Activated CD4-positive, alpha-beta T cell treated with anti-CD3 and anti-CD28 coated beads for 36 hours (primary cell): ENCODE measurements at regions of chr1 and their contacts with region 1.

Region 1: GRCh38 chr1:159077120-159077961 is 775 bp upstream of the AIM2 start:
- DNase-seq: peak; percentile 98
- ATAC-seq: peak; percentile 83
- H3K4me3 Mint-ChIP-seq: peak overlapping the region; percentile 85
- H3K27ac Mint-ChIP-seq: peak overlapping the region; percentile 99
- H3K4me1 Mint-ChIP-seq: peaks cover 43% of the 10 kb centered on the region
- H3K27me3 Mint-ChIP-seq: no peaks in the 10 kb centered on the region

Region 2: GRCh38 chr1:158371188-158371953 is 706.0 kb before region 1 on chr1:
- CTCF ChIA-PET with region 1: no interaction called
- POLR2A ChIA-PET with region 1: no interaction called
- intact Hi-C with region 1: loop called in 1 of 2 experiments (anchors 5 kb)
- DNase-seq: peak; percentile 75
- ATAC-seq: peak; percentile 100
- H3K4me3 Mint-ChIP-seq: no peak overlapping the region
- H3K27ac Mint-ChIP-seq: no peak overlapping the region
- H3K4me1 Mint-ChIP-seq: peaks cover 10% of the 10 kb centered on the region
- H3K27me3 Mint-ChIP-seq: peaks cover 24% of the 10 kb centered on the region

Region 3: GRCh38 chr1:158931055-158931737 is 146.1 kb before region 1 on chr1 and contains the start of gene PYHIN1:
- CTCF ChIA-PET with region 1: no interaction called
- POLR2A ChIA-PET with region 1: no interaction called
- intact Hi-C with region 1: loop called (anchors 2 to 10 kb)
- DNase-seq: peak; percentile 30
- ATAC-seq: peak; percentile 79
- H3K4me3 Mint-ChIP-seq: peak within 1 kb of the TSS; percentile 65
- H3K27ac Mint-ChIP-seq: peak within 1 kb of the TSS; percentile 75
- H3K4me1 Mint-ChIP-seq: peaks cover 32% of the 10 kb centered on the region
- H3K27me3 Mint-ChIP-seq: peaks cover 3% of the 10 kb centered on the region
- total RNA-seq, gene PYHIN1: 5.6 to 6.8 TPM

Region 4: DNA sequence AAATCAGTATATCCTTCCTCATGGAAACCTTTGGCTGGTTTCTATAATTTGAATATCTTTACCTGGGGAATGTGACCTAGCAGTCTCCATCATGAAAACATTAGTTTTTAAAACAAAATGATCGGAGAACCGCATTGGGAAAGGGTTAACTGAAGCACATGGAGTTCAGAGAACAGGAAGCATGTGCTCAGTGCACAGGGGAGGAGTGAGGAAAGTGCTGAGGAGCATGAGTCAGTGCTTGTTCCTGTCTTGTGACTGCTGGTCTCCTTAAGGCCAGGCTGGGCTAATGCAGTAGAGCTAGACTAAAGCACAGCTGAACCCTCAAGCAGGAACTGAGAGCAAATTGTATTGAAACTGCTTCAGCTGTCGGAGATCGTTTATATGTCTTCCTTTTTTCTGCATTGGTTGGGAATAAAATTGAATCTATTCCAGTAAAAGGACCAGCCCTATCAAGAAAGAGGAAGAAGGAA is 61.9 kb before region 1 on chr1:
- CTCF ChIA-PET with region 1: interaction called, 17 read pairs
- POLR2A ChIA-PET with region 1: interaction called, 43 read pairs
- intact Hi-C with region 1: no loop called
- DNase-seq: peak; percentile 81
- ATAC-seq: peak; percentile 83
- H3K4me3 Mint-ChIP-seq: peak overlapping the region; percentile 82
- H3K27ac Mint-ChIP-seq: peak overlapping the region; percentile 96
- H3K4me1 Mint-ChIP-seq: peaks cover 46% of the 10 kb centered on the region
- H3K27me3 Mint-ChIP-seq: no peaks in the 10 kb centered on the region

Region 5: DNA sequence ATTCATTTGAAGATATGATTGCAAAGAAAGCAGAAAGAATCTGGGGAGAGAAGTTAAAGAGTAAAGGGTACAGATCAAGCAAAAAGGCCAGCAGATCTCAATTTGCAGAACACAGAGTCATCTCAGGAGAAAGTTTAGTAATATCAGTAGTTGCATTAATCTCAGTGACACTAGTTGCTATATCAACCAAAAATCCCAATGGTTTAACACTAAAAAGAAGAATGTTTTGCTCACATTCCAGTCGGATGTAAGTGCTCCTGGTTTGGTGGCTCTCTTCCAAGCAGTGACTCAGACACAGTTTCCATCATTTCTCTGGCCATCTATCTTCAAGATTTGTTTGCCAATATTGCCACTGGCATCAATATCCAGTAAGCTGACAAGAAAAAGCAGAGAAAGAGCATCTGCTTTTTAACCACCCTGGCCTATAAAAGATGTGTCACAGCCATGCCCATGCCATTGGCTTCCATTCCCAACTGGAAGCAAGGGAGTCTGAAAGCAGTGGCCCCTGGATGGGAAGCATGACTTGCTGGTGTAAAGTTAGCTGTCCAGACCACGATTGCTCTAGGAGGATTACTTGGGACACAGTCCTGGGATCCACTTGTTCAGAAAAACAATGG is 44.8 kb after region 1 on chr1:
- CTCF ChIA-PET with region 1: interaction called, 4 read pairs
- POLR2A ChIA-PET with region 1: interaction called, 4 read pairs
- intact Hi-C with region 1: loop called (anchors 2 kb)
- DNase-seq: no peak
- ATAC-seq: peak; percentile 70
- H3K4me3 Mint-ChIP-seq: no peak overlapping the region
- H3K27ac Mint-ChIP-seq: no peak overlapping the region
- H3K4me1 Mint-ChIP-seq: peaks cover 15% of the 10 kb centered on the region
- H3K27me3 Mint-ChIP-seq: peaks cover 33% of the 10 kb centered on the region